Activated CD4-positive, alpha-beta memory T cell treated with anti-CD3 and anti-CD28 coated beads for 36 hours (primary cell): ENCODE measurements at regions of chr22 and their contacts with region 1.

Region 1: DNA sequence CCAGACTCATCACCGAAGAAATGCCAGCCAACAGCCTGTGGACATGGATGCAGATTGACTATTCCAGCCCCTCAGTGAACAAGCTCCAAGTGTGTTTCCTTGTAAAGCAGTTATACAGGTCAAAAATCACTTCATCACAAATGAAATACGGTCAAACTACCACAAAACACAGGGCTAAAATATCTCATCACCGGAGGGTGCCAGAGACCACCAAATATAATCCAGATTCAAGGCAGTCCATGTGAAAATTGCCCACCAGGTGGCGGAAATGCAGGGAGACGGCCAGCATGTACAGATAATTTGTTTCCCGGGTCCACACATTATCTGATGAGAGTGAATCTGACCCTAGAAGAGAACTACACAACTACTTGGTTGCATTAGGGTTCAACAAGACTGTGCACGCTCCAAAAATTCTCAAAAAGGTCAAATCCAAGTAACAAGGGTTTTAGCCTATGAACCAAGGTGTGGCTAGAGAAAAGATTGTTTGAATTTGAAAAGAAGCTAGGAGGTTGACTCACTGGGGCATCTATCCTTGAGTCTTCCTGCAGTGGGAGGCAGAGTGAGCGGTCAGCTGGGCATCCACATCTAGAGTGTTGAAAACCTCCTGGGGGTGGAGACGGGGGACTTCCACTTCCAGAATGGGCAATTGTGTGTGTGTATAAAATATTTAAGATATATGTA is 71.7 kb downstream of the IGLL5 start:
- DNase-seq: peak; percentile 81
- H3K4me3 Mint-ChIP-seq: no peak overlapping the region
- H3K27ac Mint-ChIP-seq: no peak overlapping the region
- H3K4me1 Mint-ChIP-seq: peaks cover 3% of the 10 kb centered on the region
- H3K27me3 Mint-ChIP-seq: peaks cover 21% of the 10 kb centered on the region

Region 2: DNA sequence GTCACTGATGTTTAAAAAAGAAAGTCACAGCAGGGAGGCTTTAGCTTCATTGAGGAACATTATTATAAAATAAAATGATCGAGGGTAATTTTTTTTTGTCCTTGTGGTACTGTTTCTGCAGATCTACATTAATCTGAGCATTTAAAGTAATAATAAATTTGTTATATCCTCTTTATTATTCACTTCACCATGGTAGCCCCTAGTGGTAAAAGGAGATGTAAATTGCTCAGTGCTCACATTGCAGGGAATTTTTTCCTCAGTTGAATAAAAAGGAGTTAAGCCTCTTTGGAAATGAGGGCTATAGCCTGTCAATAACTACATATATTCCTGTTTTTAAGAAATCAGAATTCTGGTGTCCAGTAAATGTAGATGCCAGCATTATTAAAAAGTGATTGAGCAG is 814.4 kb before region 1 on chr22:
- CTCF ChIA-PET with region 1: no interaction called
- POLR2A ChIA-PET with region 1: no interaction called
- intact Hi-C with region 1: no loop called
- DNase-seq: no peak
- H3K4me3 Mint-ChIP-seq: no peak overlapping the region
- H3K27ac Mint-ChIP-seq: no peak overlapping the region
- H3K4me1 Mint-ChIP-seq: no peaks in the 10 kb centered on the region
- H3K27me3 Mint-ChIP-seq: peaks cover 42% of the 10 kb centered on the region

Region 3: DNA sequence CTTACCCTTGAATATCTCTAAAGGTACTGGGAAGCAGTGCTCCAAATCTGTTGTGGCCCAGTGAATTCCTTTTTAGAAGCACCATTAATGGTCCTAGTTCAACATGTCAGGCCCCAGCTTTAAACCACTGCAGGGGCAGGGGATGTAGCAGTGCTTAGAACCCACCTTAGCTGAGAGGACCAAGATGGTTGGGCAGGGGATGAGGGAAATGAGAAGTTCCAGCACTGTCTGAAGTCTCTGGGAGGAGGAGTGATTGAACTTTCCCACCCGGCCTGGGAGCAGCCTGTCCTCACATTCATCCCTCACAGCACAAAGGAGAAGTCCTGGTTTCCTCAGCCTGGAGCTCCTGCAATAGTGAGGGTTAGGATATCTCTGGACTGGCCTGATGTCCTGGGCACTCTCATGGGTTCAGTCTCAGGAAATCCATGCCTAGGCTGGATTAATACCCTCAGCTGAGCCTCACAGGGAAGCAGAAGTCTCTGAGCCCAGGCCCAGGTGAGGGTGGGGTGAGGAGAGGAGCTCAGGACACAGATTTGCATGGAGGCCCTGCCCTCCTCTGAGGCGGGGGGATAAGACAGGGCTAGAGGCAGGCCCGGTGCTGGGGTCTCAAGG is 371.6 kb before region 1 on chr22:
- CTCF ChIA-PET with region 1: interaction called, 19 read pairs
- POLR2A ChIA-PET with region 1: no interaction called
- intact Hi-C with region 1: no loop called
- DNase-seq: no peak
- H3K4me3 Mint-ChIP-seq: no peak overlapping the region
- H3K27ac Mint-ChIP-seq: no peak overlapping the region
- H3K4me1 Mint-ChIP-seq: no peaks in the 10 kb centered on the region
- H3K27me3 Mint-ChIP-seq: peaks cover 19% of the 10 kb centered on the region

Region 4: DNA sequence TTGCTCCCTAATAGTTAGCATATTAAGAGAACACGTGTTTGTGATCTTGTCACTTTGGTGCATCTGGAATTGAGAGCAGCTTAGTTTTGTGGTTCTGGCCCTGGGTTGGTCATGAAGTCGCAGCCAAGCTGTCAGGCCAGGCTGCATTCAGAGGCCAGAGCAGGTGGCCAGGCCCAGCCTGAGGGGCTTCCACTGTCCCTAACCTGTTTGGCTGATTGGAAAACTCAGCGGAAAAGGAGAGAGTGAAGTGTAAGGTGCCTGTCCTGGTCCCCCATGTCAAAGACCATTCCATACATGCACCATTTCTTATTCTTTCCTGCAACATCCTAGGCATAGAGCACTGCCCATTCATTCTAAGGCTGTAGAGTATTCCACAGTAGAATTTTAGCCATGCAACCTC is 183.2 kb before region 1 on chr22:
- CTCF ChIA-PET with region 1: no interaction called
- POLR2A ChIA-PET with region 1: no interaction called
- intact Hi-C with region 1: no loop called
- DNase-seq: no peak
- H3K4me3 Mint-ChIP-seq: no peak overlapping the region
- H3K27ac Mint-ChIP-seq: no peak overlapping the region
- H3K4me1 Mint-ChIP-seq: peaks cover 6% of the 10 kb centered on the region
- H3K27me3 Mint-ChIP-seq: peaks cover 2% of the 10 kb centered on the region

Region 5: GRCh38 chr22:22787786-22788459 is 171.4 kb before region 1 on chr22:
- CTCF ChIA-PET with region 1: interaction called, 40 read pairs
- POLR2A ChIA-PET with region 1: no interaction called
- intact Hi-C with region 1: no loop called
- DNase-seq: peak; percentile 77
- H3K4me3 Mint-ChIP-seq: no peak overlapping the region
- H3K27ac Mint-ChIP-seq: no peak overlapping the region
- H3K4me1 Mint-ChIP-seq: peaks cover 44% of the 10 kb centered on the region
- H3K27me3 Mint-ChIP-seq: no peaks in the 10 kb centered on the region

Region 6: GRCh38 chr22:22877523-22878210 is 81.6 kb before region 1 on chr22:
- CTCF ChIA-PET with region 1: interaction called, 12 read pairs
- POLR2A ChIA-PET with region 1: no interaction called
- intact Hi-C with region 1: no loop called
- DNase-seq: peak; percentile 82
- H3K4me3 Mint-ChIP-seq: no peak overlapping the region
- H3K27ac Mint-ChIP-seq: no peak overlapping the region
- H3K4me1 Mint-ChIP-seq: no peaks in the 10 kb centered on the region
- H3K27me3 Mint-ChIP-seq: no peaks in the 10 kb centered on the region

Region 7: DNA sequence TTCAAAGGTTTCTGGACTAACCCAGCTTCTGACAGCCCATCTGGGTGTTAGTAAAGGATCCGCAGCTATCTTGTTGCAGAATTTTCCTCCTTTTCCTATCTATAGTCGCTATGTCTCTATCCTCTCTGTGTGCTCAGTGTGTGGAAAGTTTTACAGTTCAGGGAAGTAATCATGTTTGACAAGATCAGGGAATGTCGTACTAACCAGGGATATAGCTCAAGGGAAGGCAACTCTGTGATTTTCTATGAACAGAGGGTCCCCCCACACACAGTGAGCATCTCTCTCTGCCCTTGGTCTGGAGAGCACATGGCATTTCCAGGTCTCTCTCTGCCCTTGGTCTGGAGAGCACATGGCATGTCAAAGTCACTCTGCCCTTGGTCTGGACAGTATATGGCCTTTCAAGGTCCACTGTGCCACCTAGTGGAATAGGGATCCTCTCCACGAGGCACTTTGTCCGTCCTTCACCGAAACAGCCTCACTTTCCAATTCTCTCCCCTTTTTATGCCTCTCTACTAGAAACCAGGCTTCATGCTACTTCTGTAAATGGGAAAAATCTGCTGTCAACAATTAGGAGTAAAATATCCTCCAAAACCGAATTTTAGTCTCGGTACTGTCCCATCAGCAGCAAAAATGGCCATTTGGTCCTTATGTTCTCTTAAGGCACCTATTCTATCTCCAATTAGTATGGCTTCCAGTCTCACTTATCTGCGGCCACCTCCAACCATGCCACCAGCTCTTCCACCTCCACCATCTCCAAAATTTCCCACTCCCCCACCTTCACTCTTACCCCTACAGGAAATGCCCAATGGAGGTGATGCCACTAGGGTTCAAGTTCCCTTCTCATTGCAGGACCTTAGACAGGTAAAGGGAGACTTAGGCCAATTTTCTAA is 17.0 kb after region 1 on chr22:
- CTCF ChIA-PET with region 1: interaction called, 25 read pairs
- POLR2A ChIA-PET with region 1: no interaction called
- intact Hi-C with region 1: no loop called
- DNase-seq: no peak
- H3K4me3 Mint-ChIP-seq: no peak overlapping the region
- H3K27ac Mint-ChIP-seq: no peak overlapping the region
- H3K4me1 Mint-ChIP-seq: no peaks in the 10 kb centered on the region
- H3K27me3 Mint-ChIP-seq: peaks cover 8% of the 10 kb centered on the region

Region 8: GRCh38 chr22:22988150-22988549 is 28.9 kb after region 1 on chr22:
- CTCF ChIA-PET with region 1: no interaction called
- POLR2A ChIA-PET with region 1: no interaction called
- intact Hi-C with region 1: no loop called
- DNase-seq: no peak
- H3K4me3 Mint-ChIP-seq: no peak overlapping the region
- H3K27ac Mint-ChIP-seq: no peak overlapping the region
- H3K4me1 Mint-ChIP-seq: peaks cover 4% of the 10 kb centered on the region
- H3K27me3 Mint-ChIP-seq: peaks cover 26% of the 10 kb centered on the region

Region 9: GRCh38 chr22:23093051-23093788 is 133.9 kb after region 1 on chr22:
- CTCF ChIA-PET with region 1: no interaction called
- POLR2A ChIA-PET with region 1: no interaction called
- intact Hi-C with region 1: no loop called
- DNase-seq: no peak
- H3K4me3 Mint-ChIP-seq: no peak overlapping the region
- H3K27ac Mint-ChIP-seq: no peak overlapping the region
- H3K4me1 Mint-ChIP-seq: no peaks in the 10 kb centered on the region
- H3K27me3 Mint-ChIP-seq: no peaks in the 10 kb centered on the region

Region 10: DNA sequence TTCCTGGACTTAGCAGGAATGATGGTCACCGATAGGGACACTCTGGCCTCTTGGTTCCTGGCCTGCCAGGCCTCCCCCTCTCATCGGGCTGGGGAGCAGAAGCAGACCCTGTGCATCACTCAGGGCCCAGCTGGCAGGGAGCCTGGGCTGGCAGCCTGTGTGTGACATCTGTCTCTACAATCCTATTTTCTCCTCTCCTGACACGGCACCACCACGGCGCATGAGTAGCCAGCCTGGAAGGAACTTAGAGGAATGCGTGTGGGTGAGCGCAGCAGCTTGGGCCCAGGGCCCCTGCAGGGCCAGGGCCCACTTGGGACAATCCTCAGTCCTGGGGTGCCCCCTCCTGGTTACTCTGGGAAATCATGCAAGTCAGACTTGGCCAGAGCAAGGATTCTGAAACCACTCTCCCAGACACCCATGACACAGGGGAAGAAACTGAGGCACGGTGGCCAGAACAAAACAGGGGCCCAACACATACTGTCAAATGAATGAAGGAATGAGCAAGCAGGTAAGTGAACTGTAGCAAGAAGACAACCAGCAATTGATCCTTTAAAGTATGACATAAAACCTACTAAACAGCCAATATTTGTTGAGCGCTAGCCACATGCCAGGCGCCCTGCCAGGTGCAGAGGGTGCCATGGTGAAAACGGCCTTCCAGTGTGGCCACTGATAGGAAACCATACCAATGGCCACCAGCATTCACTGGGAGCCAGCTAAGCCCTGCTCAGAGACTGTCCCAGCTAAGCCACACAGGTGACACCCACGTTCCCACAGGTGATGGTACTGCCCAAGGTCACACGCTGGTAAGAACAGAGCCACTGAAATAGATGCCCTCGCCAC is 169.2 kb after region 1 on chr22:
- CTCF ChIA-PET with region 1: interaction called, 217 read pairs
- POLR2A ChIA-PET with region 1: interaction called, 3 read pairs
- intact Hi-C with region 1: loop called (anchors 1 kb)
- DNase-seq: peak; percentile 77
- H3K4me3 Mint-ChIP-seq: no peak overlapping the region
- H3K27ac Mint-ChIP-seq: no peak overlapping the region
- H3K4me1 Mint-ChIP-seq: no peaks in the 10 kb centered on the region
- H3K27me3 Mint-ChIP-seq: no peaks in the 10 kb centered on the region

Region 11: DNA sequence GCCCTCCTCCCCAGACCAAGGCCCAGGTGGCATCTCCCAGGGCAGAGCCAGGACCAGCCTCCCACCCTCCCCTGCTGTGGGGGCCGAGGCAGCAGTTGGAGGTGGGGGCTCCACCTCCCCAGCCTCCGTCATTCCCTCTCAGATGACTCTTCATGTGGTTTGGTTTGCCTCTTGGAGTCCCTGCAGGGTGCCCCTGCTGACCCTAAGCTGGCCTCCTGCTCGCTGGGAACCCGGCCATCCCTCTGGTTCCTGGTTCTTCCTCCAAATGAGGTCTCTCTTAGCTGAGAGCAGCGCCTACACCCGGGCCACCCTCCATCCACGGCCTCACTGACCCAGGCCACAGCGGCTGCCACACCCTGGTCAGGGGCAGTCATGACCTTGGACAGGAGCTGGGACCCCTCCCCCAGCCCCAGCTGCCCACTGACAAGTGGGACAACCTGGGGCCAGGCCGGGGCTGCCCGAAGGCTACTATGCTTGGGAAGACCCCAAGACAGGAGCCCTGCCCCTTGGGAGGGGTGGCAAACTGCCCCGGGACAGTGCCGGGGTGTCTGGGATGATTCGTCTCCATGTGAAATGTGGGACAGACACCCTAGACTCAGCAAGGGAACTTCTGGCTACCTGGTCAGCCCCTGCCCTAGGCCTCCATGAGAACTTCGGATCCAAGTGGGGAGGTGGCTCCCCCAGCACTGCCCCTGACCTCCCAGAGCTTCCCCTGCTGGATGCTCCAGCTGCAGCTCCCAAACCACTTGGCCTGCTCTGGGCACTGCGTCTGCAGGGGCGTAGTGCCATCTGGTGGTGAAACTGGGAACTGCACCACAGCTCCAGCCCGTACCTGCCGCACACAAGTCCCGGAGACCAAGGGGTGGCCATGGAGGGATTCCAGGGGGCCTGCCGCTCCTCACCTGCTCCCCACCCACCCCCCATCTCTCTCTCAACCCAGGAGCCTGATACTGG is 426.3 kb after region 1 on chr22:
- CTCF ChIA-PET with region 1: interaction called, 9 read pairs
- POLR2A ChIA-PET with region 1: no interaction called
- intact Hi-C with region 1: loop called (anchors 5 kb)
- DNase-seq: peak; percentile 88
- H3K4me3 Mint-ChIP-seq: no peak overlapping the region
- H3K27ac Mint-ChIP-seq: no peak overlapping the region
- H3K4me1 Mint-ChIP-seq: no peaks in the 10 kb centered on the region
- H3K27me3 Mint-ChIP-seq: peaks cover 2% of the 10 kb centered on the region